Cardiac septum (tissue), 1 donor: ENCODE measurements at regions of chr19 and their contacts with region 1.

Region 1: DNA sequence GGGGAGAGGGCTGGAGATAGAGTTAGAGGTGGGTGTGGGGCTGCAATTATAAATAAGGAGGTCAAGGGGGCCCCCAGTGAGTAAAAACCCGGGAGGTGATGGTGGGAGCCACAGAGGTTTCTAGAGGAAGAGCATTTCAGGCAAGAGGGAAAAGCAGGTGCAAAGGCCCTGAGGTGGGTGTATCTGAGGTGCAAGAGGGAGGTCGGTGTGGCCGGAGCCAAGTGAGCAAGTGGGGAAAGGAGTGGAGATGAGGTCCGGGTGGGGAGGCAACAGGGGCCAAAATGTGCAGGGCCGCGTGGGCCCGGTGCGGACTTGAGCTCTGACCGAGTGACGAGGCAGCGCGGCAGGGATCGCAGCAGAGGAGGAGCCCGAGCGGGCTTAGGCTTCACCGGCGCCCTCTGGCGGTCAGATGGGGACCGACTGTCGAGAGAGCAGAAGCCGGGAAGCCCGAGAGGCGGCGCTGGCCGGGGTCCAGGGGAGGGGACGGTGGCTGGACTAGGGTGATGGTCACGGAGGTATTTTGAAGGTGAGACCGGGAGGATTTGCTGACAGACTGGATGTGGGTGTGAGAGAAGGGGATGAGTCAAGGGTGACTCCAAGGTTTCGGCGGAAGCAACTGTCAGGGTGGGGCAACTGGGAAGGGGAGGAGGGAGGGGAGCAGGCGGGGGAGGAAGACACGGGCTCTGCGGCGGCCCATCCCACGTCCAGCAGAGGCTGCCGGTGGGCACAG is 17.7 kb upstream of the SPACA4 start:
- DNase-seq: peak; percentile 96

Region 2: GRCh38 chr19:48271531-48272151 is 317.2 kb before region 1 on chr19:
- intact Hi-C with region 1: loop called (anchors 5 kb)
- DNase-seq: no peak

Region 3: GRCh38 chr19:48290771-48291488 is 297.9 kb before region 1 on chr19:
- intact Hi-C with region 1: no loop called
- DNase-seq: peak; percentile 91

Region 4: DNA sequence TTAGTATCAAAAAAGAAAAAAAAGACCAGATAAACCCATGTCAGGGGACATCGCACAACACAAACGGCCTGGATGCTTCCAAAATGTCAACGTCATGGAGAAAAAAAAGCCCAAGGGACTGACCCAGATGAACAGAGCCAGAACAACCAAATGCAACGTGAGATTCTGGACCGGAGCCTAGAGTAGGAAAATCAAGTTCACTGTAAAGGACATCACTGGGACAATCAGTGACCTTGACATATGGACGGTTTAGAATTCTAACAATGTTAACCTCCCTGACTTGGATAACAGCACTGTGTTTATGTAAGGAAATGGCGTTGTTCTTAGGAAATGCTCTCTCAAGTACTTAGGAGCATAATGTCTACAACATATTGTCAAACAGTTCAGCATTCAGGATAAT is 278.6 kb before region 1 on chr19:
- intact Hi-C with region 1: loop called (anchors 5 kb)
- DNase-seq: no peak

Region 5: DNA sequence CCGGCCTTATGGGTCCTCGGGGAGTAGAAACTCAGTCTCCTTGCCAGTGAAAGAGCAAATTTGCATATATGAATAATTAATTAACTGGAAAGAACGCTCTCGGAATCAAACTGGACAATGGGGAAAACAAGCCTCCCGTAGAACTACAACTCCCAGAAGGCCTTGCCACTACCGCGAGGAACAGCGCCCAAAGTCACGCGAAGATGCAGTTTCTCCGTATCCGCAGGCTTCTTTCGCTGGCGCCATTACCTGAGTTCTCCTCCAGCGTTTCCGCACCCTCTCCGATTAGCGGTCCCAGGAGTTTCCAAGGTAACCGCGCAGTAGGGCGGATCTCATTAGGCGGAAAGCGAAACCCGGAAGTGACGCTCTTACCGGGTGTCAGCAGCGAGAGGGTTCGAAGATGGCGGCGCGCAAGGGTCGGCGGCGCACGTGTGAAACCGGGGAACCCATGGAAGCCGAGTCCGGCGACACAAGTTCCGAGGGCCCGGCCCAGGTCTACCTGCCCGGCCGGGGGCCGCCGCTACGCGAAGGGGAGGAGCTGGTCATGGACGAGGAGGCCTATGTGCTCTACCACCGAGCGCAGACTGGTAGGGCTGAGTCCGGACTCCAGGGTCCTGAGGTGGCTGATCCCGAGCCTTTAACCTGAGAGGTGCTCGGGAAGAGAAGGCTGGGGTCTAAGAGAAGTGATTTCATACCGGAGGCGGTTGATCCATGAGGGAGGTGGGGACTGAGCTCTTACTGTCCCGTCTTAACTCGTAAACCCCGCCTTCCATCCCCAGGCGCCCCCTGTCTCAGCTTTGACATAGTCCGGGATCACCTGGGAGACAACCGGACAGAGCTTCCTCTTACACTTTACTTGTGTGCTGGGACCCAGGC is 143.0 kb before region 1 on chr19 and contains the start of gene GRWD1:
- intact Hi-C with region 1: loop called (anchors 5 kb)
- DNase-seq: peak; percentile 95
- total RNA-seq, gene GRWD1: 17.5 TPM

Region 6: DNA sequence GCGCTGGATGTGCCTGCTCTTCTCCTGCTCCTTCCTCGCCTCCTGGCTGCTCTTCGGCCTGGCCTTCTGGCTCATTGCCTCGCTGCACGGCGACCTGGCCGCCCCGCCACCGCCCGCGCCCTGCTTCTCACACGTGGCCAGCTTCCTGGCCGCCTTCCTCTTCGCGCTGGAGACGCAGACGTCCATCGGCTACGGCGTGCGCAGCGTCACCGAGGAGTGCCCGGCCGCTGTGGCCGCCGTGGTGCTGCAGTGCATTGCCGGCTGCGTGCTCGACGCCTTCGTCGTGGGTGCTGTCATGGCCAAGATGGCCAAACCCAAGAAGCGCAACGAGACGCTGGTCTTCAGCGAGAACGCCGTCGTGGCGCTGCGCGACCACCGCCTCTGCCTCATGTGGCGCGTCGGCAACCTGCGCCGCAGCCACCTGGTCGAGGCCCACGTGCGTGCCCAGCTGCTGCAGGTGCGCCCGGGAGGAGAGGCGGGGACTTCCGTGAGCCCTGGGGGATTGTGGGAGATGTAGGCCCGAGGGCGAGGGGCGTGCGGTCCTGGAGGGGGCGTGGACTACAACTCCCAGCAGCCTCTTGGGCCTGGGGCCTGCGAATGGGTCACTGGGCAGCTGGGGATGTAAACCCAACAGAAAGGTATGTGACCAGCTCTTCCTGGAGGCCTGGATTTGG is 126.7 kb before region 1 on chr19:
- intact Hi-C with region 1: no loop called
- DNase-seq: no peak

Region 7: GRCh38 chr19:48489608-48490216 is 99.1 kb before region 1 on chr19:
- intact Hi-C with region 1: loop called (anchors 2 kb)
- DNase-seq: peak; percentile 92

Region 8: DNA sequence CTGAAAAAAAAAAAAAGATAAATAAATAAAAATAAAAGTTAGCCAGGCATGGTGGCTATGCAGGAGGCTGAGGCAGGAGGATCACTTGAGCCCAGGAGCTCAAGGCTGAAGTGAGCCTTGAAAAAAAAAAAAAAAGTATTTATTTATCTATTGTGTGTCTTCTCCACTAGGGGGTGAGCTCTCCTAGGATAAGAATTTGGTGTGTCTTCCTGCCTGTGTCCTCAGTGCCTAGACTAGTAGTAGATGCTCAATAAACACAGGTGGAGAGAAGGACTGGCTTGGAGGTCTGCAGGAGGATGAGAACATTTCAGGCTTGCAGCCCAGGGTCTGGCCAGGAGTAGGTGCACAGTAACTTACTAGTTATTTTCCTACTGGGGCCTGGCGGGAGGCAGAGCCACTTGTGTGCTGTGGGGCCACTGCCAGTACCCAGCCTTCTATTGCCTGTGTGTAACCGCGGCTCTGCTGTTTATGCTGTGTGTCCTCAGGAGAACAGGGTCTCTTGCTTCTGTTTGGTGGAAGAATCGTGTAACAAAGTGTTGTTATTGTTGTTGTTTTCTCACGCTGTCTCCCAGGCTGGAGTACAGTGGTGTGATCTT is 82.6 kb before region 1 on chr19:
- intact Hi-C with region 1: loop called (anchors 5 kb)
- DNase-seq: no peak

Region 9: GRCh38 chr19:48608798-48609263 is 20.0 kb after region 1 on chr19:
- intact Hi-C with region 1: no loop called
- DNase-seq: no peak

Region 10: DNA sequence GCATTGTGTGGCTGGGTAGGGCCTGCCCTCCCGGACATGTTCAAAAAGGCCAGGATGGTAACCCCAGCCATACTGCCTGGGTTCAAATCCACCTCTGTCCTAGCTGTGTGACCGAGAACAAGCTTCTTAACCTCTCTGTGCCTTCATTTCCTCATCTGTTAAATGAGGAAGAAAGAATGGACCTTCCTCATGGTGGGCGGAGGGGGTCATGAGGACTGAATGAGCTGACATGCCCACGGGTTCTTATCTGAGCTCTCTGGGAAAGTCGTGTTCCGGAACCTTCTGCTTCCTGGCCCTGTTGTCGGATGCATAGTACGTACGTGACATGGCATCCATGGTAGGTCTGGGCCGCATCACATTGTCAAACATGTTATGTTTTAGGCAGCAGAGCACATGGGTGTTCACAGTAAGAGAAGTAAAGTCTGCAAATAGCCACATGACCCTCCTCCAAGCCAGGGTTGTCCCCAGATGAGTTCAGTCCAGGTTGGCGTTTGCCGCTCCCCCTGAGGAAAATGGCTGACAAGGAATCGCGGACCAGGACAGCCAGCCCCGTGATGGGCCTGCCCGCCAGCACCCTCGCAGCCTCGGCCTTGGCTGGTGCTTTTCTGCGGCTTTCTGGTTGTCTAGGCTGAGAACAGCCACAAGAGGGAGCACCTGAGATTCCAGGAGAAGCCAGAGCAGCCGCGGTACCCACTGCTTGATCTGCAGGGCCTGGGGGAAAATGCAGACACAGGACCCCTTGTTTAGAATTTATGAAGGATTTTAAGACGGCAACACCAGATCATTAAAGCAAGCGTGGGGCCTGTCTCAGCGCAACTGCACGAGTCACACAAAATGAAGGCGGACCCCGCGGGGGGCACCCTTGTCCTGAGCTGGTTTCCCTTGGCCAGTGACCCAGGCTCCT is 86.3 kb after region 1 on chr19:
- intact Hi-C with region 1: no loop called
- DNase-seq: peak; percentile 85